Ascending aorta (tissue), 2 donors: ENCODE measurements at regions of chr11 and their contacts with region 1.

Region 1: GRCh38 chr11:18599739-18600230 is at the start of gene MISFA:
- DNase-seq: no peak
- H3K4me3 ChIP-seq: no peak within 1 kb of the TSS
- H3K27ac ChIP-seq: no peak within 1 kb of the TSS
- H3K4me1 ChIP-seq: no peaks in the 10 kb centered on the region
- H3K27me3 ChIP-seq: no peaks in the 10 kb centered on the region
- CTCF ChIP-seq: no peak
- total RNA-seq, gene MISFA: not detected

Region 2: GRCh38 chr11:17839973-17840611 is 759.7 kb before region 1 on chr11:
- intact Hi-C with region 1: no loop called
- DNase-seq: no peak
- H3K4me3 ChIP-seq: no peak overlapping the region
- H3K27ac ChIP-seq: no peak overlapping the region
- H3K4me1 ChIP-seq: no peaks in the 10 kb centered on the region
- H3K27me3 ChIP-seq: no peaks in the 10 kb centered on the region
- CTCF ChIP-seq: no peak

Region 3: DNA sequence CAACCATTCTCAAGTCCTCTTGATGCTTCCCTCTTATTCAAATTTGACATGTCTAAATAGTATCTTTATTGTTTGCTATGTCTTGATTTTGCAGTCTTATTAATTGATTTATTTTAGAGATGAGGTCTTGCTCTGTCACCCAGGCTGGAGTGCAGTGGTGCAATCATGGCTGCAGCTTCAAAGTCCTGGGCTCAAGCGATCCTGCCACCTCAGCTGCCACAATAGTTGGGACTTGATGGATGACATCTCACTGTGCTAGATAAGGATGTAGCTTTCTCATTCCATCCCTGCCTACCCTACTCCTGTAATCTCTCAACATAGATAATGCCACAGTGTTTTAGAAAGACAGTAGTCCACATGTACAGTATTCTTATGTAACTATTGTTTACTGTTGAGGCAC is 41.9 kb after region 1 on chr11:
- intact Hi-C with region 1: loop called (anchors 5 kb)
- DNase-seq: no peak
- H3K4me3 ChIP-seq: no peak overlapping the region
- H3K27ac ChIP-seq: no peak overlapping the region
- H3K4me1 ChIP-seq: no peaks in the 10 kb centered on the region
- H3K27me3 ChIP-seq: no peaks in the 10 kb centered on the region
- CTCF ChIP-seq: no peak